ENCODE measurements at regions of chr9 and their contacts with region 1.

Region 1: DNA sequence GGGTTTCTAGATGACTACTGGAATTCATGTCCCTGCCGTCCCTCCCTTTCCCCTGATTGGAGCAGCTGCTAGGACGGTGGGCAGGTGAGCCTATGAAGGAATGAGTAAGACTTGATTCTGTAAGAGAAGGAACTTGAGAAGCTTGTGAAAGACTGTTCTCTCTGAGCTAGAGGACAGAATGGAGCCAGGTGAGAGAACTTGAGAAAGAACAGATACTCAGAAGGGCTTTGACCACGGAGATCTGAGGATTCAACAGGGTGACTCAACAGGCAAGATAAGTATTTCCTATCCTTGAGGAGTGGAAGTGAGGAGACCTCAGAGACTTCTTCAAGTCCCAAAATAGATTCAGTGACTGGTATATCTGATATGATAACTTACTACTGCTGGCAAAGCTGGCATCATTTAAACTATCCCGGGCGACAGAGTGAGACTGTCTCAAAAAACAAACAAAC is 41.9 kb downstream of the HSDL2 start:
- DNase-seq: no peak
- ATAC-seq: no peak
- H3K4me3 ChIP-seq: no peak overlapping the region
- H3K27ac ChIP-seq: no peak overlapping the region
- H3K4me1 ChIP-seq: no peaks in the 10 kb centered on the region
- H3K27me3 ChIP-seq: no peaks in the 10 kb centered on the region
- CTCF ChIP-seq: no peak

Region 2: GRCh38 chr9:112361601-112362000 is 60.2 kb before region 1 on chr9:
- intact Hi-C with region 1: loop called in 1 of 3 experiments (anchors 10 kb)
- DNase-seq: no peak
- ATAC-seq: peak in 3 of 4 donors; percentile 77 to 80 (median 79)
- H3K4me3 ChIP-seq: no peak overlapping the region
- H3K27ac ChIP-seq: no peak overlapping the region
- H3K4me1 ChIP-seq: no peaks in the 10 kb centered on the region
- H3K27me3 ChIP-seq: no peaks in the 10 kb centered on the region
- CTCF ChIP-seq: peak; percentile 13 to 60 (median 40)

Measured in pancreas (tissue), 10 donors.